Transverse colon (tissue), 4 donors: ENCODE measurements at regions of chr6 and their contacts with region 1.

Region 1: GRCh38 chr6:44332585-44332984 is 9.9 kb upstream of the SPATS1 start:
- DNase-seq: no peak
- H3K4me3 ChIP-seq: no peak overlapping the region
- H3K27ac ChIP-seq: no peak overlapping the region
- H3K4me1 ChIP-seq: no peaks in the 10 kb centered on the region
- H3K27me3 ChIP-seq: peaks cover 48% of the 10 kb centered on the region
- CTCF ChIP-seq: no peak
- EP300 ChIP-seq: no peak
- POLR2A ChIP-seq: no peak

Region 2: DNA sequence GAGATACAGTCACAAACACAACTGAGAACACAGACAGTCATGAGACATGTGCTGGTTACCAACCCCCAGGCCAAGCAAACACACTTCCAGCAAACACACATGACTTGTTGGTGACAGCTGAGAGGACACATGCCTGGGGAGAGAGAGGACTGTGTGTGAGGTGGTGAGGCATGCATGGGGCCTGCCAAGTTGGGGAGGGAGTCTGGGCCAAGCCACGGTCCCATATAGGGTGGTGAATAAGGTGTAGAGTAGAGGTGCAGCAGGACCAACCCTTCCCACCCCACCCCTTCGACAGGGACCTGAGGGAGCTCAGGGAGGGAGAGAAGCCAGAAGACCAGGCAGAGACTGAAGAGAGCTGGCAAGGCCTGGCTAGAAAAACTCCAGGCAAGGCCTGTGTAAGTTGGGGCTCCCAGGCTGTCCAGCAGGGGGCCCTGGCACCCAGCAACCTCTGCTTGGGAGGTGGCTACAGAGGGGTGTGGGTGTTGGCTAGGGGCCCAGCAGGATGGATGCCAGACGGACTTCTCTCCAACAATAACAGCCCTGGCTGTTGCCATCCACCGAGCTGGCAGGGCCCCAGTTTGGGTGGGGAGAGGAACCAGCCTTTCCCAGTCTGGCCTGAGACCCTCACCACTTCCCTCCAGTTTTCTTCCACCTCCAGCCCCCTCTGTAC is 111.2 kb before region 1 on chr6:
- in situ Hi-C with region 1: no loop called
- intact Hi-C with region 1: no loop called
- DNase-seq: peak; percentile 96
- H3K4me3 ChIP-seq: peak overlapping the region in 1 of 4 donors; percentile 79
- H3K27ac ChIP-seq: peak overlapping the region; percentile 85 to 94 (median 86)
- H3K4me1 ChIP-seq: peaks cover 43 to 92% (median 74%) of the 10 kb centered on the region in 4 donors
- H3K27me3 ChIP-seq: peaks cover 4% of the 10 kb centered on the region
- CTCF ChIP-seq: peak; percentile 76 to 92 (median 84)
- EP300 ChIP-seq: no peak
- POLR2A ChIP-seq: no peak

Region 3: DNA sequence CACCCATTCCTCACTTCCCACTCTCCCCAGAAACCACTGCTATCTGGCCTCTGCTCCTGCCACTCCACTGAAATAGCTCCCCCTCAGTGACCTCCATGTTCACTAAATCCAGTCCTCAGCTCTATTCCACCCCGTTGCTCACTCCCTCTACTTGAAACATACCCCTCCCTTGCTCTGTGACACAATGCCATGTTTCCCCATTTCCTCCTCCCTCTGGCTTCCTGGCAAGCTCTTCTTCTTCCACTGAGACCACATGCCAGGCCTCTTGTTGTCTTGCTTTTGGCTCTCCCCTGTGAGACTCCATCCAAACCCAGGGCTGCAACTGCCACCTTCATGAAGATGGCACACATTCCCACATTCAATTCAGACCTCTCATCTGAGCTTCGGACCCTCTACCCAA is 48.5 kb before region 1 on chr6:
- in situ Hi-C with region 1: loop called in 1 of 4 experiments (anchors 5 kb)
- intact Hi-C with region 1: loop called (anchors 10 kb)
- DNase-seq: no peak
- H3K4me3 ChIP-seq: no peak overlapping the region
- H3K27ac ChIP-seq: no peak overlapping the region
- H3K4me1 ChIP-seq: no peaks in the 10 kb centered on the region
- H3K27me3 ChIP-seq: peaks cover 35% of the 10 kb centered on the region
- CTCF ChIP-seq: no peak
- EP300 ChIP-seq: no peak
- POLR2A ChIP-seq: no peak